CD4-positive, alpha-beta memory T cell (primary cell): ENCODE measurements at regions of chr1 and their contacts with region 1.

Region 1: DNA sequence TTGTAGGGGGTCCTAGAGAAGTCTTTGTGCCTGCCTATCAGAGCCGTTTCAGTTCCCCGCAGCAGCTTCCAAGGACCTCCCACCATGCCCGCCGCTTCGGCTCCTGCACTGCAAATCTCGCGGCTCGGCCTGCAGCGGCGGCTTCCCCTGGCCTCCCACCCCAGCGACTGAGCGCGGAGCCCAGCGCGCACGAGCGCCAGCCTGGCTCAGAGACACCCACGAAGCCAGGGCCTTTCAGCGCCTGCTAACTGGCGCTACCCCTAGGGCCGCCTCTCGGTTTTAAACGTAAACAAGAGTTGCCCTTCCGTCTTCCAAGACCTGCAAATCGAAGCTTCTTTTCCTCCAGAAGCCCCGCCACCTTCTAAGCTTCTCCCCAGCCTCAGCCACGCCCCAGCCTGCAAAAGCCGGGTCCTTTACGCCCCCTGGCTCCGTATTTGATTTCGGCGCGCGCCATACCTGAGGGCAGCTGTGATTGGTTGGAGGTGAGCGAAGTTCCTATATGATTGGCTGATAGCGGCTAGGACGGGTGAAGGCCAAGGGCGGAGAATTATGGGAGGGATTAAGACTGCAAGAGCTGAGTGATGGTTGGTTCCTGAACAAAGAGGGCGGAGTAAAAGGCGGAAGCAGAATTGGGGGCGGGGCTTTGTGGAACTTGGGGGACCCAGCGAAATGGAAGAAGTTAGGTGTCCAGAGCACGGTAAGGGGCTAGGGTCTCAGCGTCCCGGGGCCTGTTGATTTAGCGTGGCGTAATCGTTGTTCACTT is at the start of gene TTF2:
- DNase-seq: peak; percentile 97 to 99 (median 98)
- H3K4me3 ChIP-seq: peak within 1 kb of the TSS; percentile 77 to 85
- H3K4me3 Mint-ChIP-seq: no peak within 1 kb of the TSS
- H3K27ac ChIP-seq: peak within 1 kb of the TSS; percentile 75
- H3K27ac Mint-ChIP-seq: peak within 1 kb of the TSS in 2 of 7 donors; percentile 81 to 84
- H3K4me1 ChIP-seq: peaks cover 40% of the 10 kb centered on the region
- H3K4me1 Mint-ChIP-seq: peaks cover 23 to 46% (median 29%) of the 10 kb centered on the region in 4 donors
- H3K27me3 ChIP-seq: no peaks in the 10 kb centered on the region
- H3K27me3 Mint-ChIP-seq: no peaks in the 10 kb centered on the region
- total RNA-seq, gene TTF2: 26.4 to 29.5 TPM

Region 2: DNA sequence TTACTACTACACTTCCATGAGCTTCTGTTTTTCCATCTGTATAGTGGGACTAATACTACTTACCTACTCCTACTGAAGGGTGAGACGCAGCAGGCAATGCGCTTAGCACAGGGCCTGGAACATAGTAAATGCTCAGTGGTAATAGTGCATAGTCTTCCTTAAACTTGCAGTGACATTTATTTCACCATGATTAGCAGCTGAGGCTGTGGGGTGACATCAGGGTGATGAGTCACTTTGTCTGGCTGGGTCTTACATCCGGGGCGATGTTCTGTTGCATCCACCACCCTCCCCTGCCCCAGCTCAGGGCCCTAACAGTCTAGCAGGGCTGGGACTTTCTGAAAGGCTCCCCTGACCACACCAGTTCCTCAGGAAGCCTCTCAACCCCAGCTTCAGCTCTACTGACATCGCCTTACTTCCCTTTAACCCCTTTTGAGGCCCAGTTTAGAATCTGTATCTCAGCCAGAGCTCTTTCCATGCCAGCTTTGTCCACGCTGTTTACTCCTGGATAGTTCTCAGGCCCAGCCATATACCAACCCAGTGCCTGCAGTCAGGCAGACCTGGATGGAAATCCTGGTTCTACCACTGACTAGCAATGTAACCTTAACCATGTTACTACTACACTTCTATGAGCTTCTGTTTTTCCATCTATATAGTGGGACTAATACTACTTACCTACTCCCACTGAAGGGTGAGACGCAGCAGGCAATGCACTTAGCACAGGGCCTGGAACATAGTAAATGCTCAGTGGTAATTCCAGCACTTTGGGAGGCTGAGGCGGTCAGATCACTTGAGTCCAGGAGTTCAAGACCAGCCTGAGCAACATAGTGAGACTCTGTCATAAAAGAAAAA is 555.3 kb before region 1 on chr1:
- CTCF ChIA-PET with region 1: no interaction called
- POLR2A ChIA-PET with region 1: interaction called, 7 read pairs
- intact Hi-C with region 1: loop called (anchors 5 kb)
- DNase-seq: peak; percentile 85 to 98 (median 89)
- H3K4me3 ChIP-seq: no peak overlapping the region
- H3K4me3 Mint-ChIP-seq: peak overlapping the region in 7 of 8 donors; percentile 17 to 75 (median 67)
- H3K27ac ChIP-seq: peak overlapping the region; percentile 86
- H3K27ac Mint-ChIP-seq: peak overlapping the region; percentile 91 to 98 (median 94)
- H3K4me1 ChIP-seq: peaks cover 78% of the 10 kb centered on the region
- H3K4me1 Mint-ChIP-seq: peaks cover 48 to 86% (median 63%) of the 10 kb centered on the region in 4 donors
- H3K27me3 ChIP-seq: no peaks in the 10 kb centered on the region
- H3K27me3 Mint-ChIP-seq: no peaks in the 10 kb centered on the region

Region 3: GRCh38 chr1:116737020-116737854 is 322.6 kb before region 1 on chr1:
- CTCF ChIA-PET with region 1: interaction called, 26 read pairs
- POLR2A ChIA-PET with region 1: interaction called, 58 read pairs
- intact Hi-C with region 1: loop called (anchors 1 kb)
- DNase-seq: peak; percentile 82 to 85 (median 83)
- H3K4me3 ChIP-seq: peak overlapping the region in 1 of 2 donors; percentile 44
- H3K4me3 Mint-ChIP-seq: peak overlapping the region; percentile 50 to 80 (median 74)
- H3K27ac ChIP-seq: peak overlapping the region; percentile 97
- H3K27ac Mint-ChIP-seq: peak overlapping the region; percentile 97 to 100 (median 99)
- H3K4me1 ChIP-seq: peaks cover 49% of the 10 kb centered on the region
- H3K4me1 Mint-ChIP-seq: peaks cover 41 to 55% (median 46%) of the 10 kb centered on the region in 4 donors
- H3K27me3 ChIP-seq: no peaks in the 10 kb centered on the region
- H3K27me3 Mint-ChIP-seq: no peaks in the 10 kb centered on the region

Region 4: GRCh38 chr1:116817582-116818064 is 242.2 kb before region 1 on chr1:
- CTCF ChIA-PET with region 1: interaction called, 3 read pairs
- POLR2A ChIA-PET with region 1: interaction called, 7 read pairs
- intact Hi-C with region 1: loop called (anchors 1 kb)
- DNase-seq: peak; percentile 67 to 77 (median 71)
- H3K4me3 ChIP-seq: no peak overlapping the region
- H3K4me3 Mint-ChIP-seq: peak overlapping the region in 7 of 8 donors; percentile 39 to 76 (median 60)
- H3K27ac ChIP-seq: no peak overlapping the region
- H3K27ac Mint-ChIP-seq: peak overlapping the region; percentile 79 to 96 (median 88)
- H3K4me1 ChIP-seq: peaks cover 36% of the 10 kb centered on the region
- H3K4me1 Mint-ChIP-seq: peaks cover 22 to 40% (median 29%) of the 10 kb centered on the region in 4 donors
- H3K27me3 ChIP-seq: no peaks in the 10 kb centered on the region
- H3K27me3 Mint-ChIP-seq: no peaks in the 10 kb centered on the region

Region 5: GRCh38 chr1:116934586-116935207 is 125.2 kb before region 1 on chr1:
- CTCF ChIA-PET with region 1: interaction called, 6 read pairs
- POLR2A ChIA-PET with region 1: interaction called, 4 read pairs
- intact Hi-C with region 1: loop called (anchors 5 kb)
- DNase-seq: peak in 4 of 5 donors; percentile 26 to 37 (median 34)
- H3K4me3 ChIP-seq: no peak overlapping the region
- H3K4me3 Mint-ChIP-seq: peak overlapping the region in 1 of 8 donors; percentile 39
- H3K27ac ChIP-seq: no peak overlapping the region
- H3K27ac Mint-ChIP-seq: peak overlapping the region in 6 of 7 donors; percentile 45 to 96 (median 88)
- H3K4me1 ChIP-seq: peaks cover 27% of the 10 kb centered on the region
- H3K4me1 Mint-ChIP-seq: peaks cover 18 to 26% (median 22%) of the 10 kb centered on the region in 4 donors
- H3K27me3 ChIP-seq: no peaks in the 10 kb centered on the region
- H3K27me3 Mint-ChIP-seq: no peaks in the 10 kb centered on the region

Region 6: DNA sequence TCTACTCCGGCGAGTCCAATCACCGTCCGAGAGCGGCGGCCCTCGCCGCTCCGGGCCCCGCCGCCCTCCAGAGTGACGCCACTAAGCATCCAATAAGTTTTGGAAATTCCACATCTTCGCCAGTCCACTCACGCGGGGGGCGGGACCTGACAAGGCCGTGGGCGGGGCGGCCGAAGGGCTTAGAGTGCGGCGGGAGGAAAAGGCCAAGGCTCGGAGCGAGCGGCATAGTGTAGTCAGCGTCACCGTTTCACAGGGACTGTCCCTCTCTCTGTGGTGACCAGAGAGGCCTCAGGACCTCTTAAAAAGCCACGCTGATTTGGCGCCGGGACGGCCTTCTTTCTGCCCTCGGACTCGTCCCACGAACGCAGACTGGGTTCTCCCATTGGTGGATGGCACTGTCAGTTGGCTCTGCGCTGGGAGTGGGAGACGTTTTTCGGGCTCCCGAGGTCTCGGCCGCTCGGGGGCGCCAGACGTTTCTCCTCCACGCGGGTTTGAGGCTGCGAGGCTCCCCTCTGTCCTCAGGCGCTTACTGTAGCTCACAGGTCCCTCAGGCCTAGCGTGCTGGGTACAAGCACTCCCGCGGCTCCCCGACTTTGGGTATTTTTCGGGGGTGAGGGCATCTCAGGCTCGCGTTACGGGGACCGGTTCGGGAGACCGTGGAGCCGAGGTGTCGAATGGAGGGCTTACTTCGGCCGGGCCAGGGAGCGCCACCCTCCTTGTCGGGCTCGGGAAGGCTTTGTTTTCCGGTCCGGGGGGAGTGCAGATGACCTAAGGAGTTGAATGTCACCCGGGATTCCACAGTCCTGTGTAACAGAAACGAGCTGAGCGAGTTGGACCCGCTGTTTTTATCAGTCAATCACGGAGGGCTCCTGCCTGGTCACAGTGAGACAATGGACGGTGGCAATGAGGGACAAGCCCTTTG is 62.2 kb after region 1 on chr1:
- CTCF ChIA-PET with region 1: interaction called, 111 read pairs
- POLR2A ChIA-PET with region 1: interaction called, 8 read pairs
- intact Hi-C with region 1: loop called (anchors 2 kb)
- DNase-seq: peak; percentile 79 to 83 (median 82)
- H3K4me3 ChIP-seq: peak overlapping the region; percentile 85 to 98
- H3K4me3 Mint-ChIP-seq: peak overlapping the region; percentile 87 to 92 (median 88)
- H3K27ac ChIP-seq: peak overlapping the region; percentile 53
- H3K27ac Mint-ChIP-seq: peak overlapping the region; percentile 7 to 87 (median 70)
- H3K4me1 ChIP-seq: peaks cover 15% of the 10 kb centered on the region
- H3K4me1 Mint-ChIP-seq: peaks cover 4 to 10% (median 8%) of the 10 kb centered on the region in 4 donors
- H3K27me3 ChIP-seq: no peaks in the 10 kb centered on the region
- H3K27me3 Mint-ChIP-seq: peaks cover 4 to 5% of the 10 kb centered on the region in 2 donors

Region 7: GRCh38 chr1:117605774-117606648 is 546.2 kb after region 1 on chr1 and contains the start of gene TENT5C:
- CTCF ChIA-PET with region 1: interaction called, 3 read pairs
- POLR2A ChIA-PET with region 1: interaction called, 5 read pairs
- intact Hi-C with region 1: loop called (anchors 1 kb)
- DNase-seq: peak; percentile 99 to 100 (median 99)
- H3K4me3 ChIP-seq: peak within 1 kb of the TSS; percentile 93 to 98
- H3K4me3 Mint-ChIP-seq: peak within 1 kb of the TSS; percentile 91 to 100 (median 98)
- H3K27ac ChIP-seq: peak within 1 kb of the TSS; percentile 92
- H3K27ac Mint-ChIP-seq: peak within 1 kb of the TSS; percentile 94 to 100 (median 99)
- H3K4me1 ChIP-seq: peaks cover 43% of the 10 kb centered on the region
- H3K4me1 Mint-ChIP-seq: peaks cover 28 to 59% (median 37%) of the 10 kb centered on the region in 4 donors
- H3K27me3 ChIP-seq: no peaks in the 10 kb centered on the region
- H3K27me3 Mint-ChIP-seq: no peaks in the 10 kb centered on the region
- total RNA-seq, gene TENT5C: 13.9 to 14.8 TPM